ENCODE measurements at regions of chr1 and their contacts with region 1.

Region 1: GRCh38 chr1:246753670-246754535 is 29.7 kb downstream of the SCCPDH start:
- DNase-seq: peak; percentile 36 to 75 (median 62)
- ATAC-seq: peak; percentile 82
- H3K4me3 ChIP-seq: no peak overlapping the region
- H3K4me3 Mint-ChIP-seq: no peak overlapping the region
- H3K27ac ChIP-seq: no peak overlapping the region
- H3K27ac Mint-ChIP-seq: no peak overlapping the region
- H3K4me1 ChIP-seq: no peaks in the 10 kb centered on the region
- H3K4me1 Mint-ChIP-seq: no peaks in the 10 kb centered on the region
- H3K27me3 ChIP-seq: no peaks in the 10 kb centered on the region
- H3K27me3 Mint-ChIP-seq: no peaks in the 10 kb centered on the region
- CTCF ChIP-seq: peak; percentile 61

Region 2: GRCh38 chr1:246689409-246690008 is 64.4 kb before region 1 on chr1:
- CTCF ChIA-PET with region 1: interaction called, 5 read pairs
- POLR2A ChIA-PET with region 1: no interaction called
- intact Hi-C with region 1: loop called in 1 of 2 experiments (anchors 2 kb)
- DNase-seq: peak in 6 of 9 experiments; percentile 8 to 75 (median 42)
- ATAC-seq: peak; percentile 93
- H3K4me3 ChIP-seq: no peak overlapping the region
- H3K4me3 Mint-ChIP-seq: no peak overlapping the region
- H3K27ac ChIP-seq: no peak overlapping the region
- H3K27ac Mint-ChIP-seq: no peak overlapping the region
- H3K4me1 ChIP-seq: peaks cover 7% of the 10 kb centered on the region
- H3K4me1 Mint-ChIP-seq: peaks cover 4% of the 10 kb centered on the region
- H3K27me3 ChIP-seq: no peaks in the 10 kb centered on the region
- H3K27me3 Mint-ChIP-seq: no peaks in the 10 kb centered on the region
- CTCF ChIP-seq: peak; percentile 54